Transverse colon (tissue), 4 donors: ENCODE measurements at regions of chr16 and their contacts with region 1.

Region 1: DNA sequence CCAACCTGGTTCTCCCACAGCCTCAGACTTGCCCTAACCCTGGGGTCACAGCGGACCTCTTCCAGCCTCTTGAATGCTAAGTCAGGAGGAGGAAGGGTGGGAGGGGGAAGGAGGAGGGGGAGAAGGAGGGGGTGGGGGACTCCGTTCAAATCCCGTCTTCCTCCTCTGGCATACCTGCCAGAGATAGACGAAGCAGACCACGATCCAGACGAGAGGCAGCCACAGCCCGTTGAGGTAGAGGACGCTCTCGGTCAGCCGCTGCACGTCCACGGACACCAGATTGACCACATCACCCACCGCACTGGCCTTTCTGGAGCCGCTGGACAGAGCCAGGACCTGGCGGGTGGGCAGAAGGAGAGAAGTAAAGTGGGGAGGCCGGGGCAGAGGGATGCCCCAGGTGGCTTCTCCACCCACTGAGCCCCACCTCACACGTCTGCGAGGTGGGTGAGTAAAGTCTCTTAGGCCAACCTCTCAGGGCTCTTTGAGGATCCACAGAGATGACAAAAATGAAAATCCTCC is 25.4 kb downstream of the ABCC6 start:
- DNase-seq: no peak
- H3K4me3 ChIP-seq: no peak overlapping the region
- H3K27ac ChIP-seq: no peak overlapping the region
- H3K4me1 ChIP-seq: no peaks in the 10 kb centered on the region
- H3K27me3 ChIP-seq: no peaks in the 10 kb centered on the region
- CTCF ChIP-seq: no peak
- EP300 ChIP-seq: no peak
- POLR2A ChIP-seq: no peak

Region 2: DNA sequence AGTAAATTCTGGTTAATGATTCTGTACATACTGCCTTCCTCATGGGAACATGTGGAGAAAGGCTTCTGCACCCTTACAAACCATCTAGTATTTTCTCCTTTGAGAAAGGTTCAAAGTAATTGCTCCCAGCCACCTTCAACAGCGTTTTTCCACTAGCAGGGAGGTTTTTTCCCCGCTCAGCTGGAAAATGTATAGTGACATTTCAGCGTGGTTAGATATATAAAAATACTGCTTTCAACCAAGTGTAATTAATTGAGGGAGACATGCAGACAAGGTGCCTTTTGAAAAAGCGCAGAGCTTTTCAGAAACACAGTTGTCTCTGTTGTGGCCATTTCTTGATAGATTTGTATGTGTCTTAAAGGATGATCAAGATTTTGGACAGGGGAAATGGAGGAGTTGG is 758.4 kb before region 1 on chr16:
- in situ Hi-C with region 1: no loop called
- intact Hi-C with region 1: loop called (anchors 2 kb)
- DNase-seq: no peak
- H3K4me3 ChIP-seq: no peak overlapping the region
- H3K27ac ChIP-seq: peak overlapping the region in 3 of 4 donors; percentile 13 to 33 (median 26)
- H3K4me1 ChIP-seq: peaks cover 0 to 27% (median 5%) of the 10 kb centered on the region in 4 donors
- H3K27me3 ChIP-seq: peaks cover 19% of the 10 kb centered on the region
- CTCF ChIP-seq: no peak
- EP300 ChIP-seq: no peak
- POLR2A ChIP-seq: no peak

Region 3: GRCh38 chr16:16175296-16175695 is 22.6 kb before region 1 on chr16:
- in situ Hi-C with region 1: no loop called
- intact Hi-C with region 1: no loop called
- DNase-seq: peak; percentile 25
- H3K4me3 ChIP-seq: no peak overlapping the region
- H3K27ac ChIP-seq: no peak overlapping the region
- H3K4me1 ChIP-seq: no peaks in the 10 kb centered on the region
- H3K27me3 ChIP-seq: no peaks in the 10 kb centered on the region
- CTCF ChIP-seq: no peak
- EP300 ChIP-seq: no peak
- POLR2A ChIP-seq: no peak